Activated CD4-positive, alpha-beta T cell treated with anti-CD3 and anti-CD28 coated beads, Interleukin-2, amount 10 ng/mL, durations not matched to agents 7 days and 5 days (primary cell): ENCODE measurements at regions of chrX and their contacts with region 1.

Region 1: GRCh38 chrX:100685284-100685996 is 41.4 kb downstream of the SRPX2 start:
- DNase-seq: peak; percentile 70
- H3K4me3 Mint-ChIP-seq: no peak overlapping the region
- H3K27ac Mint-ChIP-seq: no peak overlapping the region
- H3K4me1 Mint-ChIP-seq: peaks cover 2% of the 10 kb centered on the region
- H3K27me3 Mint-ChIP-seq: peaks cover 3% of the 10 kb centered on the region

Region 2: GRCh38 chrX:100768679-100769338 is 83.4 kb after region 1 on chrX:
- CTCF ChIA-PET with region 1: interaction called, 25 read pairs
- POLR2A ChIA-PET with region 1: no interaction called
- DNase-seq: peak; percentile 86
- H3K4me3 Mint-ChIP-seq: no peak overlapping the region
- H3K27ac Mint-ChIP-seq: no peak overlapping the region
- H3K4me1 Mint-ChIP-seq: no peaks in the 10 kb centered on the region
- H3K27me3 Mint-ChIP-seq: peaks cover 24% of the 10 kb centered on the region